ENCODE measurements at regions of chr9 and their contacts with region 1.

Region 1: DNA sequence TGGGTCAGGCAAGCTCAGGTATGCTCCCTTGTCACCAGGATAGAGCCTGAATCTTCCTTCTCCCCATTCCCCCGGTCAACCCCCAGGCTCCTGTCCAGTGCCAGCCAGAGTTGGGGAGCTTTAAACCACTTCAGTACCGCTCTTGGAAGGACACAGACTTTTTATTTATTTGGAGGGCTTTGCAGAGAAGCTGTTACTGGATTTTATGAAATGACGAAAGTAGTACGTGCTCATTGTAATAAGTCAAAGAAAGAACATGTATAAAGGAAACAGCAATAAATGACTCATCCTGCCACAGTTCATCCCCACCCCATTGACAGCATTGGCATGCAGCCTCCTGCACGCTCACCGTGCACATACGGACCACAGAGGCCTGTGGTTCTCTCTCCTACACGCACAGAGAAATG is 230.3 kb downstream of the AUH start:
- DNase-seq: peak; percentile 93
- H3K4me3 Mint-ChIP-seq: peak overlapping the region; percentile 49
- H3K27ac Mint-ChIP-seq: peak overlapping the region; percentile 97
- H3K4me1 Mint-ChIP-seq: peaks cover 38% of the 10 kb centered on the region
- H3K27me3 Mint-ChIP-seq: no peaks in the 10 kb centered on the region
- CTCF ChIP-seq: no peak

Region 2: GRCh38 chr9:91047993-91048607 is 83.3 kb before region 1 on chr9:
- CTCF ChIA-PET with region 1: no interaction called
- POLR2A ChIA-PET with region 1: no interaction called
- intact Hi-C with region 1: no loop called
- DNase-seq: peak; percentile 67
- H3K4me3 Mint-ChIP-seq: no peak overlapping the region
- H3K27ac Mint-ChIP-seq: peak overlapping the region; percentile 85
- H3K4me1 Mint-ChIP-seq: peaks cover 18% of the 10 kb centered on the region
- H3K27me3 Mint-ChIP-seq: no peaks in the 10 kb centered on the region
- CTCF ChIP-seq: no peak

Region 3: DNA sequence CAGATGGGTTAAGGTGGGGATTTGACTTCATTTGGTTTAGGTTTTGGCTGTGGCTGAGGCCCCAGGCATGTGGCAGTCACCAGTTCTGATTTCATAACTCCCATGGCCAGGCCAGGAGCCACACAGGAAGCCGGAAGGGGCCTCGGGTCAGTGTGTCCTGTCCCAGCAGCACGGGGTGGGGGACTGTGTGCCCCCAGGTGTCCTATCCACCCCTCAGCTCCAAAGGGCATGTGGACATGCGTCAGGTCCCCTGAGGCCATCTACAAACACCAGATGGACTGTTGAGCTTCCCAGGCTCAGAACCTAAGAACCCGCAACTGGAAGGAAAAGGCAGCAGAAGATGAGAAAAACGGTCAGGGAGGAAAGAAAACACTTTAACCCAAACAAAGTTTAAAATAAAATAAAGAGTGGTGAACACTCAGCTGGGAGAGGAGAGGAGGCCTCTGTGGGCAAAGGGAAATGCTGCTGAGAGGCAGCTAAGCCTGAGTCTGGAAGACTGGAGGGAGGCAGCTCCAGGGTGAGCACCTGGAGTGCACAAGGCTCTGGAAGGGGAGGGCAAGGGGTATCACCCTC is 30.5 kb before region 1 on chr9:
- CTCF ChIA-PET with region 1: interaction called, 7 read pairs
- POLR2A ChIA-PET with region 1: interaction called, 15 read pairs
- intact Hi-C with region 1: no loop called
- DNase-seq: peak; percentile 31
- H3K4me3 Mint-ChIP-seq: peak overlapping the region; percentile 38
- H3K27ac Mint-ChIP-seq: peak overlapping the region; percentile 43
- H3K4me1 Mint-ChIP-seq: peaks cover 34% of the 10 kb centered on the region
- H3K27me3 Mint-ChIP-seq: no peaks in the 10 kb centered on the region
- CTCF ChIP-seq: no peak

Region 4: DNA sequence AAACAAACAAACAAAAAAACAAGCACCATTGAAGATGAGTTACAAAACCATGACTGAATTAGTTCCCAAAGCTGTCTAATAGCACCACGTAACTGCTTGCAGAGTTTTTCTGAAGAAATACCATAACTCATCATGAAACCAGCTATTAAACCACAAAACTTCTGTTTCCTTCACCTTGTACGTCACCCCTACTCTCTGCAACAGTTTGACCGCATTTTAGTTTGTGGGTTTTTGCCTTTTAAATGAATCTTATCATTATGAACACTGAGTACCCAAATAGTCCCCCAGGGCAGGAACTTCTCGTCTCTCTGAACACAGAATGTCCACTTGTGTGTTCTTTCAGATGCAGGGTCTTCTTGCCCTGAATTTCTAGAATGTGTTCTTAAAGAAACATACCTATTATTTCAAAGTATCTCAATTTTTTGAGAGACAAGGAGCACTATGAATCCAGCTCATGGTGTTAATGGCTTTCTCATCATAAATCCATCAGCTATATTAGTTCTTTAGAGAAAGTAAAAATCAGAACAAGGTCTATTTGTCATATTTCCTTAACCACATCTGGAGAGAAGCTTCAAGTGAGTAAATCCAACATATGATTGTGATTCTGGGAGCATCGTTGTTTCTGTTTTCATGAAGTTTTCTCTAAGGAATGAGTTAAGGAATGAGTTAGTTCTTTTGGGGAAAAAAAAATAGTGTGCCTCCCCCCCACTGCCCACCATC is 19.7 kb after region 1 on chr9:
- CTCF ChIA-PET with region 1: interaction called, 3 read pairs
- POLR2A ChIA-PET with region 1: interaction called, 17 read pairs
- intact Hi-C with region 1: no loop called
- DNase-seq: peak; percentile 86
- H3K4me3 Mint-ChIP-seq: peak overlapping the region; percentile 21
- H3K27ac Mint-ChIP-seq: peak overlapping the region; percentile 96
- H3K4me1 Mint-ChIP-seq: peaks cover 43% of the 10 kb centered on the region
- H3K27me3 Mint-ChIP-seq: no peaks in the 10 kb centered on the region
- CTCF ChIP-seq: no peak

Region 5: GRCh38 chr9:91164724-91165520 is 33.5 kb after region 1 on chr9:
- CTCF ChIA-PET with region 1: no interaction called
- POLR2A ChIA-PET with region 1: interaction called, 11 read pairs
- intact Hi-C with region 1: no loop called
- DNase-seq: peak; percentile 94
- H3K4me3 Mint-ChIP-seq: peak overlapping the region; percentile 6
- H3K27ac Mint-ChIP-seq: peak overlapping the region; percentile 57
- H3K4me1 Mint-ChIP-seq: peaks cover 30% of the 10 kb centered on the region
- H3K27me3 Mint-ChIP-seq: no peaks in the 10 kb centered on the region
- CTCF ChIP-seq: no peak

Region 6: GRCh38 chr9:91395553-91396471 is 264.4 kb after region 1 on chr9:
- CTCF ChIA-PET with region 1: no interaction called
- POLR2A ChIA-PET with region 1: no interaction called
- intact Hi-C with region 1: no loop called
- DNase-seq: peak; percentile 75
- H3K4me3 Mint-ChIP-seq: peak overlapping the region; percentile 8
- H3K27ac Mint-ChIP-seq: peak overlapping the region; percentile 23
- H3K4me1 Mint-ChIP-seq: peaks cover 26% of the 10 kb centered on the region
- H3K27me3 Mint-ChIP-seq: no peaks in the 10 kb centered on the region
- CTCF ChIP-seq: no peak

Measured in MCF 10A (cell line).